Activated naive CD4-positive, alpha-beta T cell treated with anti-CD3 and anti-CD28 coated beads for 36 hours (primary cell): ENCODE measurements at regions of chr1 and their contacts with region 1.

Region 1: DNA sequence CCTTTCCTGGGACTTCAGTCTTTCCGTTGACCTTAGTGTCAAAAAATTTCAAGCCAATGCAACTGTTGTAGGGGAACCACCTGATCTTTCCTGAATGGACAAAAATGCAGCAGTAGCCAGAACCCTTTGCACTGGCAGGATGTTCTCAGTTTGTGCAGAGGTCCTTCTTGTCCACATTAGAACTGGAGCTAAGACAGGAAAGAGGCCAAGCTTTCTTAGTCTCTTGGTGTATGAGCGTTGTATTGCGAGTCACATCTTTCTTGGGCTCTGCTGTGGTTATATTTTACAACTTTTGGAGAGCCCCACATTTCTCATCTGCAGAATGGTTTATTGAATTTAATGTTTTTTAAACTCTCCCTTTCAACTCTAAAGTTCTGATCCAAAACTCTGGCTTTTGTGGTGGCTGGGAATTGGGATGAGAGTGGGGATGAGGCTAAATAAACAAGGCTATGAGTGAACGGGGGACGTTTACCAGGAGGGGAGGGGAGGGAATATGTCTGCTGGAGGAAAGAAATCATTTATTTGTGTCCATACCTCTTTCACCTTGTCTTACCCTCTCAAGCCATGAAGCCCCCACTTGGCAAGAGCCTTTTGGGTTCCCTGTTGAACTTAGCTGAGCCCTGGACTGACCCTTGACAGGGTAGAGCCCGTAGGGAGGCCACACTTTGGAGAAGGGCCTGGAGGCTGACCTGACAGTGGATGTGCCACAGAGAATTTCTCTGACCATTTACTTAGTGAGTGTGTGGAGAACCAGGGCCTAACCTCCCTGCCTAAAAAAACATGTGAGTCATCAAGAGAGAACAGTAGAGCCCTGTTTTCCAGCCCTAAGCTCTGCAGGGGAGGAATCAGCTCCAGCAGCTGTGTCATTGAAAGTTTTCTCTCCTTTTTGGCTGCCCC is 586 bp downstream of the CHI3L2 start:
- DNase-seq: peak; percentile 29
- H3K4me3 Mint-ChIP-seq: no peak overlapping the region
- H3K27ac Mint-ChIP-seq: peak overlapping the region; percentile 82
- H3K4me1 Mint-ChIP-seq: peaks cover 80% of the 10 kb centered on the region
- H3K27me3 Mint-ChIP-seq: no peaks in the 10 kb centered on the region

Region 2: GRCh38 chr1:111275079-111275478 is 47.0 kb after region 1 on chr1:
- CTCF ChIA-PET with region 1: interaction called, 5 read pairs
- intact Hi-C with region 1: loop called (anchors 1 kb)
- DNase-seq: peak; percentile 46
- H3K4me3 Mint-ChIP-seq: no peak overlapping the region
- H3K27ac Mint-ChIP-seq: peak overlapping the region; percentile 32
- H3K4me1 Mint-ChIP-seq: peaks cover 47% of the 10 kb centered on the region
- H3K27me3 Mint-ChIP-seq: peaks cover 22% of the 10 kb centered on the region

Region 3: GRCh38 chr1:111769517-111770146 is 541.5 kb after region 1 on chr1:
- CTCF ChIA-PET with region 1: no interaction called
- intact Hi-C with region 1: loop called (anchors 1 kb)
- DNase-seq: peak; percentile 67
- H3K4me3 Mint-ChIP-seq: no peak overlapping the region
- H3K27ac Mint-ChIP-seq: no peak overlapping the region
- H3K4me1 Mint-ChIP-seq: peaks cover 12% of the 10 kb centered on the region
- H3K27me3 Mint-ChIP-seq: no peaks in the 10 kb centered on the region